Activated CD4-positive, alpha-beta T cell treated with anti-CD3 and anti-CD28 coated beads for 36 hours (primary cell): ENCODE measurements at regions of chr2 and their contacts with region 1.

Region 1: GRCh38 chr2:216163518-216163917 is 54.4 kb downstream of the XRCC5 start:
- DNase-seq: no peak
- ATAC-seq: no peak
- H3K4me3 Mint-ChIP-seq: no peak overlapping the region
- H3K27ac Mint-ChIP-seq: peak overlapping the region; percentile 21
- H3K4me1 Mint-ChIP-seq: peaks cover 38% of the 10 kb centered on the region
- H3K27me3 Mint-ChIP-seq: no peaks in the 10 kb centered on the region

Region 2: DNA sequence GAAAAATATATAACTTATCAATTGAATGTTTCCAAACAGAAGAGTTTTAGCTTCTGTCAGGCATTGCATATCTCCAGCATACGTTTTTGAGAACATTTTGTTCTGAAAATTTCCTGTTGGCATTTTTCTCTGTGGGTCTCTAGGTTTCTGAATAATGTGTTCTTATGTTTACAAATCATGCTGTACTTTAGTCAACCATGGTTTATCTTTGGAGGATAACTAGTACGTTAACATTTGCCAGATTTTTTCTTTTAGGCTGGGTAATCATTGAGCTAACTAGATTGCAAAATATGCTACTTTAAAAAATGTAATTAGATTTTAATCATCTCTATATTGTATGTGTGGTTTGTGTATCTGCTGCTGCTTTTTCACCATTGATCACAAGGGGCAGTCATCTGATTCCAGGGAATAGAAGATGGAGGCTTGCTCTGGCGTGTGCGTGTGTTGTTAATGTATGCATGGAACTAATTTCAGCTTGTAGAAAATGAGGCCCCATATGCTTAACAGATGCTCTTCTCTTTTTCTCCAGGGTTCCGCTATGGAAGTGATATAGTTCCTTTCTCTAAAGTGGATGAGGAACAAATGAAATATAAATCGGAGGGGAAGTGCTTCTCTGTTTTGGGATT is 33.1 kb before region 1 on chr2:
- CTCF ChIA-PET with region 1: interaction called, 3 read pairs
- POLR2A ChIA-PET with region 1: no interaction called
- intact Hi-C with region 1: loop called (anchors 2 to 5 kb)
- DNase-seq: no peak
- ATAC-seq: no peak
- H3K4me3 Mint-ChIP-seq: no peak overlapping the region
- H3K27ac Mint-ChIP-seq: peak overlapping the region; percentile 47
- H3K4me1 Mint-ChIP-seq: peaks cover 75% of the 10 kb centered on the region
- H3K27me3 Mint-ChIP-seq: no peaks in the 10 kb centered on the region

Region 3: DNA sequence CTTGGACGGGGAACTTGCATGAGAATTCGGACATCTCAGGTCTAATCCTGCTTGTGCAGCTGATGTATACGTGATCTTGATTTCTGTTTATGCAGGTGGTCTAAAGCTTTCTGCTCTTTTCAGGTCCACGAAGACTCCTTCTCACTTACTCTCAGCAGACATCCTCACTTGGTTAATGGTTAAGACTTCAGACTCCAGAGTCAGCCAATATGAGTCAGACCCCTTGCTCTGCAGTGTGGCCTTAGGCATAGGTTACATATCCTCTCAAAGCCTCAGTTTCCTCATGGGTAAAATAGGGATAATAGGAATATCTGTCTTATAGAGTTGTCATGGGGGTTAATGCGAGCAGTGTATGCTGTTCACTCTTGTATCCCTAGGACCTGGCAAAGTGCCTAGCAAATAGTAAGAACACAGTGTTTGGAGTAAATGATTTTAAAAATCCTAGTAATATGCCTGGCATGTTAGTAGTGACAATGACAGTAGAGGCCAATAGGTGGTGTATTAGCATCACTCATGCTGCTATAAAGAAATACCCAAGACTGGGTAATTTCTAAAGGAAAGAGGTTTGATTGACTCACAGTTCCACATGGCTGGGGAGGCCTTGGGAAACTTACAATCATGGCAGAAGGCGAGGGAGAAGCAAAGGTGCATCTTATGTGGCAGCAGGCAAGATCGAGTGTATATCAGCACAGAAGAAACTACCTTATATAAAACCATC is 12.0 kb before region 1 on chr2:
- CTCF ChIA-PET with region 1: interaction called, 5 read pairs
- POLR2A ChIA-PET with region 1: no interaction called
- intact Hi-C with region 1: loop called in 1 of 2 experiments (anchors 1 kb)
- DNase-seq: no peak
- ATAC-seq: peak; percentile 60
- H3K4me3 Mint-ChIP-seq: no peak overlapping the region
- H3K27ac Mint-ChIP-seq: peak overlapping the region; percentile 73
- H3K4me1 Mint-ChIP-seq: peaks cover 31% of the 10 kb centered on the region
- H3K27me3 Mint-ChIP-seq: no peaks in the 10 kb centered on the region